ENCODE measurements at regions of chrX and their contacts with region 1.

Region 1: GRCh38 chrX:103464774-103465117 is 54.5 kb downstream of the RAB40A start:
- DNase-seq: peak; percentile 74 to 75
- H3K4me3 ChIP-seq: no peak overlapping the region
- H3K27ac ChIP-seq: no peak overlapping the region
- H3K4me1 ChIP-seq: no peaks in the 10 kb centered on the region
- H3K27me3 ChIP-seq: no peaks in the 10 kb centered on the region
- CTCF ChIP-seq: peak; percentile 34 to 82 (median 68)
- POLR2A ChIP-seq: no peak

Region 2: DNA sequence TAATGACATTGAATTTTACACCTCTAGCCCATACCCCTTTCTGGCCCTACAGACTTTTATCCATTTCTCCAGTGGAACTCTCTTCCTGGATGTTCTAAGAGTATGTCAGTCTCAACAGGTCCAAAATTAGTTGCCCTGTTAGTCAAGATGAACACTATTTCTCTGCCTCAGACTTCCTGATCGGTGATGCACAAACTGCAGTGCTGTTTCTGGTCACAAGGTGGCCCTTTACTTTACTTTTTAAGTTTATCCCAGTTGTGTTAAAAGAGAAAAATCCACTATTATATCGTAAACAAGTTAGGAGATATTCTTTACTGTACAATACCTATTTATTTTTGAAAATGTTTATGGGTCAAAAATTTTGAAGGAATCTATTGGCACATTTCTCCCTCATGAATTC is 121.6 kb before region 1 on chrX:
- intact Hi-C with region 1: loop called (anchors 5 kb)
- DNase-seq: peak; percentile 55 to 62
- H3K4me3 ChIP-seq: no peak overlapping the region
- H3K27ac ChIP-seq: no peak overlapping the region
- H3K4me1 ChIP-seq: no peaks in the 10 kb centered on the region
- H3K27me3 ChIP-seq: no peaks in the 10 kb centered on the region
- CTCF ChIP-seq: peak in 5 of 6 experiments; percentile 46 to 69 (median 65)
- POLR2A ChIP-seq: no peak